ENCODE measurements at regions of chr17 and their contacts with region 1.

Region 1: DNA sequence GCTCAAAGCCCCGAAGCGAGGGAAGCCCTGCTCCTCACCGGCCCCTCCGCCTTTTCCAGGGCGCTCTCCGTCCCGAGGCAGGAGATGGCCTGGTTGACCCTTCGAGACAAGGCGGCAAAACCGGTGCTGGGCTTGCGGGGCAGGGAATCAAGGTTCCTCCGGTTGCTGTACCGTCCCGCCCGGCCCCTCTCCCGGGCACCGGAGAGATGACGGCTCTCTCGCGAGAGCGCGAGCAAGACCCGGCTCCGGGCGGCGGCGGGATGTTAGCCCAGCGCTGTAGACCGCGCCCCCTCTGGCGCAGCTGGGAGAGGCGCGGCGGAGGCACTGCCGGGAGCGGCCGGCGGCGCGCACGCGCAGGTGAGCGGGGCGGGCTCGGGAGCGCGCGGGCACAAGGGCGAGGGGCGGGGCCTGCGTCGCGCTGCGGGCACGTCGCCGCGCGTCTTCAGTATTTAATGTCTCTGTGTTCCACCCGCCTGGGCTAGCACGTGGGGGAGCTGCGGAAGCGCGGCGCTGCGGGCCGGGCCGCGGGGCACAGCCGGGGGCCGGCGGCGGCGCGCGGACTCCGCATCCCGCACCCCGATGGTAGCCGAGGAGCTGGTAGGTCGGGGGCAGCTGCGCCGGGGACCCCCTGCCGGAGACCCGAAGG is at the start of gene AKAP1:
- DNase-seq: peak; percentile 97
- ATAC-seq: peak; percentile 85
- H3K4me3 ChIP-seq: peak within 1 kb of the TSS; percentile 71 to 95 (median 85)
- H3K4me3 Mint-ChIP-seq: peak within 1 kb of the TSS; percentile 95
- H3K27ac ChIP-seq: peak within 1 kb of the TSS; percentile 77 to 86
- H3K27ac Mint-ChIP-seq: peak within 1 kb of the TSS; percentile 91
- H3K4me1 ChIP-seq: peaks cover 14 to 16% of the 10 kb centered on the region in 2 donors
- H3K4me1 Mint-ChIP-seq: peaks cover 20% of the 10 kb centered on the region
- H3K27me3 ChIP-seq: peaks cover 0 to 3% (median 0%) of the 10 kb centered on the region in 4 experiments
- H3K27me3 Mint-ChIP-seq: no peaks in the 10 kb centered on the region
- CTCF ChIP-seq: no peak
- total RNA-seq, gene AKAP1: 20.1 and 27.1 TPM in 2 replicates

Region 2: DNA sequence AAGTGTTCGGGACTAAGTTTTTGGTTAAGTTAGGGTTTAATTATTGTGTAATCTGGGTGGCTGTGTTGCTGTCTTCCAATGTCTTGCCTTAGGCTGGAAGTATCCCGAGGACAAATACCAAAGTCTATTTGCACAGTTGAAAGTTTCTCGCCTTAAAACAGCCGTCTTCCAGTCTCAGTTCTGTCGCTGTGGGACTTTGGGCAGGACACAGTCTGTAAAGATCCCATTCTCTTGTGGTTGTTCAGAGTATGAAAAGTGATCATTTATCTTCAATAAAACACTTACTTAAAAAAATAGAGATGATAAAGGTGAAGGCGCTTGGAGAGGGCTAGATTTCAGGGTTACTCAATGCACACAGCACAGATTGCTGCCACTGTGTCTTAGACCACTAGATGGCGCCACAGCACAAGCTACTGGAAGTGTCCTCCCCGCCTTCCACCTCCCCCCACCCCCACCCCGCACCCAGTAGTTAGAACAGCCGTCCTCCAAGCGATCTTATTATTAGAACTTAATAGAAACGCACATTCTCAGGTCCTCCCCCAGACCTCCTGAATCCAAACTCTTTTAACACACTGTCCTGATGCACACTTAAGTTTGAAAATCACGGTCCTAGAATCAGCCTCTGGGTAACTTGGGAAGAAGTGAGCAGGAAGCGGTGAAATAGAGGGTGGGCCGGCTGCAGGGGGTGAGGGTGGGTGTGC is 46.0 kb after region 1 on chr17:
- CTCF ChIA-PET with region 1: no interaction called
- POLR2A ChIA-PET with region 1: no interaction called
- intact Hi-C with region 1: no loop called
- DNase-seq: peak; percentile 85
- ATAC-seq: peak; percentile 98
- H3K4me3 ChIP-seq: no peak overlapping the region
- H3K4me3 Mint-ChIP-seq: no peak overlapping the region
- H3K27ac ChIP-seq: no peak overlapping the region
- H3K27ac Mint-ChIP-seq: no peak overlapping the region
- H3K4me1 ChIP-seq: peaks cover 8 to 14% of the 10 kb centered on the region in 2 donors
- H3K4me1 Mint-ChIP-seq: peaks cover 15% of the 10 kb centered on the region
- H3K27me3 ChIP-seq: no peaks in the 10 kb centered on the region
- H3K27me3 Mint-ChIP-seq: peaks cover 22% of the 10 kb centered on the region
- CTCF ChIP-seq: peak; percentile 87

Region 3: DNA sequence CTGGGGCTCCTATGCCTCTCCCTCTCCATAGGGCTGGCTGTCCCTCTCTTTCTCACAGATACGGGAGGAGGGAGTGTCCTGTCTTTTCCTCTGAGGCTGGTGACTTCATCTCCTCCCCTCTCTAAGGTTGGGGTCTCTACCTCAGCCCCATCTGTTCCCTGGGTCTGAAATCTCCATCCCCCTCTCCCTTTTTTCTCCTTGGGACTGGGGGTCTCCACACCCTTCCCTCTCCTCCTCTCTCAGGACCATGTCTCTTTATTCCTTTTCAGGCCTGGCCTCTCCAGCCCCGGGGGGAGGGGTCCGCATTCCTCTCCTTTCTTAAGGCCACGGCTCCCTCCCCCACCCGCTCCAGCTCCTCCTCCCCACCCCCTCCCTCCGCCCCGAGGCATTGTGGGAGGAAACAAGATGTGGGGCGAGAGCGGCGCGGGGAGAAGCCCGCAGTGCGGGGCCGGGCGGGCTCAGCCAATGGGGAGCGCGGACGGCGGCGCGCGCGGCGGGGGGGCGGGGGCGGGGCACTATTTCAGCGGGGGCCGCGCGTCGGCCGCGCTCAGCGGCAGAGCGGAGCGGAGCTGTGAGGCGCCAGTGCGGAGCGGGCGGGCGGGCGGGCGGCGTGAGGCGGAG is 998.1 kb after region 1 on chr17 and contains the start of gene DYNLL2:
- CTCF ChIA-PET with region 1: no interaction called
- POLR2A ChIA-PET with region 1: no interaction called
- intact Hi-C with region 1: loop called (anchors 2 kb)
- DNase-seq: peak; percentile 90
- ATAC-seq: peak; percentile 80
- H3K4me3 ChIP-seq: peak within 1 kb of the TSS; percentile 70 to 89 (median 79)
- H3K4me3 Mint-ChIP-seq: peak within 1 kb of the TSS; percentile 87
- H3K27ac ChIP-seq: peak within 1 kb of the TSS; percentile 66 to 86
- H3K27ac Mint-ChIP-seq: peak within 1 kb of the TSS; percentile 81
- H3K4me1 ChIP-seq: peaks cover 16 to 19% of the 10 kb centered on the region in 2 donors
- H3K4me1 Mint-ChIP-seq: peaks cover 31% of the 10 kb centered on the region
- H3K27me3 ChIP-seq: peaks cover 0 to 5% (median 0%) of the 10 kb centered on the region in 4 experiments
- H3K27me3 Mint-ChIP-seq: no peaks in the 10 kb centered on the region
- CTCF ChIP-seq: no peak
- total RNA-seq, gene DYNLL2: 24.4 and 25.2 TPM in 2 replicates

Measured in B cell (primary cell).